Transverse colon (tissue), 4 donors: ENCODE measurements at regions of chr15 and their contacts with region 1.

Region 1: DNA sequence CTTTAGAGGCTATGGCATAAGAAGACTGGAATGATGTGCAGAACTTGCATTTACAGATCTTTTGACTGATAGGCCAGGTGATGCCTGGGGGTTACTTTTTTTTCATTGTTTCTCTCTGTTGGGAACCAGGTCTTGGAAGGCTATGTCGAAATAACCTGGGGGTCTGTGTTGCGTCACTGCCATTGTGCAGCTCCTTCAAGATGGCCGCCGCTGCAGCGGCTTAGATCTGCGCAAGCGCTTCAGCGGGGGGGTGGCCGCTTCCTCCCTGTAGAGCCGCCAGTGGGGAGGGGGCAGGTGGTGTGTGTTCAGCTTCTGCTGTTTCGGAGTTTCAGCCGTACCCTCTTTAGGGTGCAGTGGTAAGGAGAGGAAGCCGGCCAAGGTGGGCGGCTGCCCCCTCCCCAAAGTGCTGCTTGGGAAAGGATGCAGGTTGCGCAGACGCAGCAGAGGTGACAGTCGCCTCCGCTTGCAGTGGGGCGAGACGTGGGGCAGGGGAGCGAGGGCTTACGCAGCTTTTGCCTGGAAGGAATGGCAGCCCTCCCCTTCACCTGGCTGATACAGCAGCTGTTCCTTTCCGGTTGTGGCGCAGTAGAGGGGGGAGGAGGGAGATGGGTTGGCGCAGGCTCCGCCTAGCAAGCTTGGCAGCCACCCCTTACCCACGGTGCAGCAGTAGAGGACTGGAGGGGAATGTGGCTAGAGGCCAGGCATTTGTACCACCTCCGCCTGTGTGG is 1.5 kb downstream of the SNRPN start:
- DNase-seq: peak; percentile 78
- H3K4me3 ChIP-seq: peak overlapping the region; percentile 53 to 75 (median 64)
- H3K27ac ChIP-seq: peak overlapping the region; percentile 85 to 92 (median 86)
- H3K4me1 ChIP-seq: no peaks in the 10 kb centered on the region
- H3K27me3 ChIP-seq: no peaks in the 10 kb centered on the region
- CTCF ChIP-seq: no peak
- EP300 ChIP-seq: no peak
- POLR2A ChIP-seq: peak; percentile 49

Region 2: DNA sequence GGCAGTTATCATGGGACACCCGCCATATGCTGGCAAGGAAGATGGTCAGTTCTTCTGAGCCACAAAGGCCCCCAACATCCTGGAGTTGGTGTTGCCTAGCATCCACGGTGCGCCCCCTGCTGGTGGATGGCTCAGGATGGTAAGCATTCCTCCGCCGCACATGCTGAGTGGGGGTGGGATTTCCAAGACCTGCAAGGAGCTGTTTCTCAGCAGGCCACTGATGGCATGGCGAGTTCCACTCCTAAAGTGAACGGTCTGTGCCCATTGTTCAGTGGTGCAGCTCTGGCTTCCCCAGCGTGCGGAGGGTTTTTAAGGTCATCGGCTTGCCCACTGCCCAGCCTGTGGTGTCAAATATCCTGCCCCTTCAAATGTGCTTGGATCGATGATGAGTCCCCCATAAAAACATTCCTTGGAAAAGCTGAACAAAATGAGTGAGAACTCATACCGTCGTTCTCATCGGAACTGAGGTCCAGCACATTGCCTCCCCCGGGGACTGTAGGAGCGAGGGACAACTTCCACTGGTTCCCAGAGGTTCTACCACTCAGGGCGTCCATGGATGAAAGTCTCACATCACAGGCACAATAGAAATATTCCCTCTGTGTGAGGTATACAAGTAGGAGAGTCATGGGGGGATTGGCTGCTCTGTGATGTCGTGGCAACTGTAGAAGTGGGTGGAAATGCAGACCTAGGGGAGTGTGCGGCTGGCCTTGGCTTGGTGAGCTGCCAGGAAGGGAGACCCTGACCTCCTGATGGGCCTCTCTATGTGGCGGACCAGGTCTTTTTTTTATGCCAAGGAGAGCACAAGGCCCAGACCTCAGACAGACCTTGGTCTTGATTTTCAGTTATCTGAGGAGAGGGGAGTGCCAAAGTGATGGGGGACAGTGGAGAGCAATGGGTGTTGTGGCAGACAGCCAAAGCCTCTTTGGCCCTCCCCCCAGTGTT is 100.5 kb after region 1 on chr15:
- in situ Hi-C with region 1: loop called in 1 of 4 experiments (anchors 25 kb)
- intact Hi-C with region 1: no loop called
- DNase-seq: no peak
- H3K4me3 ChIP-seq: no peak overlapping the region
- H3K27ac ChIP-seq: no peak overlapping the region
- H3K4me1 ChIP-seq: no peaks in the 10 kb centered on the region
- H3K27me3 ChIP-seq: no peaks in the 10 kb centered on the region
- CTCF ChIP-seq: no peak
- EP300 ChIP-seq: no peak
- POLR2A ChIP-seq: no peak